Prostate gland (tissue), 2 donors: ENCODE measurements at regions of chr20 and their contacts with region 1.

Region 1: DNA sequence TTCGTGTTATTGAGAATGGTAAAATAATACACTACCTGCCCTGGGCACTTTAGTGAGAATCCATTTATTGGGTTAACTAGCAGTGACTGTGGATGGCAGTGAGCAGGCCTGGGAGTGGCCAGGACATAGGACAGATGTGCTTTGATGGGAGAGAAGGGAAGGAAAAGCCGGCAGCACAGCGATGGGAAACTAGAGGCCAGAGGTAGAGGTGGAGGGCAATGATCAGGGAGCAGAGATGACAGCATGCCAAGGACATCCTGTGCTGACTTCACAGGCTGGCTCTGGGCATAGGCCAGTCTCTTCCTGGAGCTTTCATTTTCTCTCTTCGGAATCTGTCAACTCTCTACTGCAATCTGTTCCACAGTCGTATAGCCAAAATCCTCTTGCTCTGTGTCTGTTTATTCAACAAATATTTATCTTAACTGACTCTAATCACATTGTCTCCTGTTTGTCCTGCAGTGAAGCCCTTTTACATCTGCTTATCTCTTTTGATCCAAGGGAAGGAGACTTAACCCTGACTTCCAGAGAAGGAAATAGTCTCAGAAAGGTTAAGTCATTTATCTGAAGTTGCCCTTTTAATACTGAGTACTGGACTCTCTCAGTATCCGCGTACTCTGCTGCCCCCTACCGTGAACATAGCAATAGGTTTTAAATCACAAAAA is 18.4 kb upstream of the MMP24 start:
- DNase-seq: peak; percentile 82
- H3K4me3 ChIP-seq: no peak overlapping the region
- H3K27ac ChIP-seq: peak overlapping the region; percentile 78
- H3K4me1 ChIP-seq: no peaks in the 10 kb centered on the region
- H3K27me3 ChIP-seq: no peaks in the 10 kb centered on the region
- CTCF ChIP-seq: peak; percentile 54 to 90 (median 85)
- POLR2A ChIP-seq: no peak

Region 2: GRCh38 chr20:35092524-35093266 is 115.4 kb before region 1 on chr20 and contains the start of gene TRPC4AP:
- intact Hi-C with region 1: loop called (anchors 5 kb)
- DNase-seq: peak; percentile 81
- H3K4me3 ChIP-seq: peak within 1 kb of the TSS; percentile 71 to 96
- H3K27ac ChIP-seq: peak within 1 kb of the TSS; percentile 94
- H3K4me1 ChIP-seq: peaks cover 3% of the 10 kb centered on the region
- H3K27me3 ChIP-seq: no peaks in the 10 kb centered on the region
- CTCF ChIP-seq: peak; percentile 97 to 99 (median 98)
- POLR2A ChIP-seq: peak; percentile 83
- total RNA-seq, gene TRPC4AP: 65.4 to 76.6 TPM

Region 3: DNA sequence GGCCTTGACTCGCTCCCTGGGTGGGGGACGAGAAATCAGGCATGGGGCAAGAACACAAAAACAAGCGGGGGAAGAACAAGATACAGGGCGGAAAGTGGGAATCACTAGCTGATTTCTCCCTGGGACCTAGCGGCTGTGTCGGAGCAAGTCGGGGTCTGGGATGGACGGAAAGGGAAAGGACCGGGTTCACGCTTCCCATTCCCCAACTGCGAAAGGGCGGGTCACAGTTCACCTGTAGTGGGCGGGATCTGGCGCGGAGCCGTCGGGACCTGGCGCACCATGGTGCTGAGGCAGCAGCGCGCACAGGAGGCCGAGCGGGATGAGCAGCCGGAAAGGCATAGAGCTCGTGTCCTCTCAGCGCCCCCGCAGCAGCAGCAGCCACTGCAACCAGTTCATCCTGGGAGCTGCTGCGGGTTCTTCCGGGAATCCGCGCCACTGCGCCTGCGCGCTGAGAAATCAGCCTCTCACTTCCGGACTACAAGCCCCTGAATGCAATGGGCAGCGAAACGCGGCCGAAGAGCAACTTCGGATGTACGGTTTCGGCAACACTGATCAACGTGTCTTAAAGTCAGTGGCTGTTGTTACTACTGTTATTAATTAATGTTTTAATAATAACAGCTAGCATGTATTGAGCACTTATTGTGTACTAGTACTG is 61.0 kb before region 1 on chr20 and contains the start of gene EDEM2:
- intact Hi-C with region 1: loop called (anchors 2 kb)
- DNase-seq: peak; percentile 91
- H3K4me3 ChIP-seq: peak within 1 kb of the TSS; percentile 59 to 76
- H3K27ac ChIP-seq: peak within 1 kb of the TSS; percentile 71 to 73
- H3K4me1 ChIP-seq: peaks cover 5% of the 10 kb centered on the region
- H3K27me3 ChIP-seq: no peaks in the 10 kb centered on the region
- CTCF ChIP-seq: peak in 2 of 4 experiments; percentile 16 to 38
- POLR2A ChIP-seq: peak; percentile 54
- total RNA-seq, gene EDEM2: 27.1 to 30.0 TPM

Region 4: GRCh38 chr20:35368666-35369423 is 160.8 kb after region 1 on chr20:
- intact Hi-C with region 1: no loop called
- DNase-seq: no peak
- H3K4me3 ChIP-seq: no peak overlapping the region
- H3K27ac ChIP-seq: no peak overlapping the region
- H3K4me1 ChIP-seq: no peaks in the 10 kb centered on the region
- H3K27me3 ChIP-seq: no peaks in the 10 kb centered on the region
- CTCF ChIP-seq: no peak
- POLR2A ChIP-seq: no peak